Naive thymus-derived CD4-positive, alpha-beta T cell (primary cell): ENCODE measurements at regions of chr4 and their contacts with region 1.

Region 1: GRCh38 chr4:157840034-157840433 is 332.8 kb downstream of the GASK1B start:
- DNase-seq: no peak
- ATAC-seq: no peak
- H3K4me3 ChIP-seq: no peak overlapping the region
- H3K4me3 Mint-ChIP-seq: no peak overlapping the region
- H3K27ac ChIP-seq: no peak overlapping the region
- H3K27ac Mint-ChIP-seq: no peak overlapping the region
- H3K4me1 ChIP-seq: no peaks in the 10 kb centered on the region
- H3K4me1 Mint-ChIP-seq: no peaks in the 10 kb centered on the region
- H3K27me3 ChIP-seq: no peaks in the 10 kb centered on the region
- H3K27me3 Mint-ChIP-seq: no peaks in the 10 kb centered on the region

Region 2: GRCh38 chr4:157271166-157271869 is 568.7 kb before region 1 on chr4:
- CTCF ChIA-PET with region 1: no interaction called
- POLR2A ChIA-PET with region 1: no interaction called
- intact Hi-C with region 1: loop called in 1 of 2 experiments (anchors 5 kb)
- DNase-seq: no peak
- ATAC-seq: no peak
- H3K4me3 ChIP-seq: no peak overlapping the region
- H3K4me3 Mint-ChIP-seq: no peak overlapping the region
- H3K27ac ChIP-seq: no peak overlapping the region
- H3K27ac Mint-ChIP-seq: no peak overlapping the region
- H3K4me1 ChIP-seq: no peaks in the 10 kb centered on the region
- H3K4me1 Mint-ChIP-seq: no peaks in the 10 kb centered on the region
- H3K27me3 ChIP-seq: no peaks in the 10 kb centered on the region
- H3K27me3 Mint-ChIP-seq: no peaks in the 10 kb centered on the region

Region 3: GRCh38 chr4:159048166-159048886 is 1208.3 kb after region 1 on chr4:
- CTCF ChIA-PET with region 1: no interaction called
- POLR2A ChIA-PET with region 1: no interaction called
- intact Hi-C with region 1: no loop called
- DNase-seq: no peak
- ATAC-seq: no peak
- H3K4me3 ChIP-seq: no peak overlapping the region
- H3K4me3 Mint-ChIP-seq: no peak overlapping the region
- H3K27ac ChIP-seq: no peak overlapping the region
- H3K27ac Mint-ChIP-seq: no peak overlapping the region
- H3K4me1 ChIP-seq: no peaks in the 10 kb centered on the region
- H3K4me1 Mint-ChIP-seq: peaks cover 0 to 38% (median 0%) of the 10 kb centered on the region in 7 donors
- H3K27me3 ChIP-seq: no peaks in the 10 kb centered on the region
- H3K27me3 Mint-ChIP-seq: peaks cover 2 to 18% (median 5%) of the 10 kb centered on the region in 5 donors